Activated B cell treated with CpG ODN at 0.5 μM for 24 hours (primary cell): ENCODE measurements at regions of chr3 and their contacts with region 1.

Region 1: DNA sequence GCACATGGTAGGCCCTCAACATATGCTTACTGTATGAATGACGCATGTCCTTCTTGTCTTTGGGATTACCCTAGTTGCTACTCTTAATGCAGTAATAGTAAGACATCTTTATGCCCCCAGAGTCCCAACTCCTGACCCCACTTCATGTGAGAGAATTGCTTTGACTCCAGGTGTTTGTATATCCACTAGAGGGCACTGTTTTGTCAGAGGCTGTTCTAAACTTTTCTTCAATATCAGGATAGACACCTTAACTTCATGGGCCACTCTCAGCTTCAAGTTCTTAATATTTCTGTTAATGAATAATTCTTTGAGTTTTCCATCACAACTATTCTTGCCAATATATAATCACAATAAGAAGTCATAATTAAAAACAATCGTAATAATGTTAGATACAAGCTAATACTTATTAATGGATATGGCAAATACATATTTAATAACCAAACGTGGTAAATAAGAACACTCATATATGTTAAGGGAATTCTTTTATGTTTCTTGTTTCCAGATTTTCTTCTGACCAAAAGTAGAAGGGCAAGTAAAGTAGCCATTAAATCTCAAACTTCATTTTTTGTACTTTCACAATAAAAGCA is 337.2 kb upstream of the DNAJC19 start:
- DNase-seq: no peak
- ATAC-seq: no peak
- H3K4me3 Mint-ChIP-seq: no peak overlapping the region
- H3K27ac Mint-ChIP-seq: no peak overlapping the region
- H3K4me1 Mint-ChIP-seq: no peaks in the 10 kb centered on the region
- H3K27me3 Mint-ChIP-seq: peaks cover 2% of the 10 kb centered on the region
- CTCF ChIP-seq: no peak

Region 2: GRCh38 chr3:181700168-181701087 is 373.7 kb after region 1 on chr3:
- CTCF ChIA-PET with region 1: no interaction called
- POLR2A ChIA-PET with region 1: no interaction called
- intact Hi-C with region 1: loop called (anchors 10 kb)
- DNase-seq: no peak
- ATAC-seq: peak; percentile 47
- H3K4me3 Mint-ChIP-seq: peak overlapping the region; percentile 65
- H3K27ac Mint-ChIP-seq: no peak overlapping the region
- H3K4me1 Mint-ChIP-seq: peaks cover 23% of the 10 kb centered on the region
- H3K27me3 Mint-ChIP-seq: peaks cover 79% of the 10 kb centered on the region
- CTCF ChIP-seq: no peak

Region 3: GRCh38 chr3:182258538-182259177 is 931.9 kb after region 1 on chr3:
- CTCF ChIA-PET with region 1: no interaction called
- POLR2A ChIA-PET with region 1: no interaction called
- intact Hi-C with region 1: loop called (anchors 10 kb)
- DNase-seq: no peak
- ATAC-seq: no peak
- H3K4me3 Mint-ChIP-seq: no peak overlapping the region
- H3K27ac Mint-ChIP-seq: no peak overlapping the region
- H3K4me1 Mint-ChIP-seq: no peaks in the 10 kb centered on the region
- H3K27me3 Mint-ChIP-seq: peaks cover 6% of the 10 kb centered on the region
- CTCF ChIP-seq: no peak